ENCODE measurements at regions of chr15 and their contacts with region 1.

Region 1: GRCh38 chr15:37691911-37692310 is 242.5 kb upstream of the TMCO5A start:
- DNase-seq: no peak
- ATAC-seq: no peak
- H3K4me3 ChIP-seq: no peak overlapping the region
- H3K27ac ChIP-seq: no peak overlapping the region
- H3K4me1 ChIP-seq: no peaks in the 10 kb centered on the region
- H3K27me3 ChIP-seq: no peaks in the 10 kb centered on the region
- CTCF ChIP-seq: no peak
- POLR2A ChIP-seq: no peak

Region 2: GRCh38 chr15:37638116-37638515 is 53.8 kb before region 1 on chr15:
- intact Hi-C with region 1: loop called in 1 of 10 experiments (anchors 5 kb)
- DNase-seq: no peak
- ATAC-seq: no peak
- H3K4me3 ChIP-seq: no peak overlapping the region
- H3K27ac ChIP-seq: no peak overlapping the region
- H3K4me1 ChIP-seq: no peaks in the 10 kb centered on the region
- H3K27me3 ChIP-seq: no peaks in the 10 kb centered on the region
- CTCF ChIP-seq: no peak
- POLR2A ChIP-seq: no peak

Measured in heart left ventricle (tissue), 16 donors.